ENCODE measurements at regions of chr16 and their contacts with region 1.

Region 1: DNA sequence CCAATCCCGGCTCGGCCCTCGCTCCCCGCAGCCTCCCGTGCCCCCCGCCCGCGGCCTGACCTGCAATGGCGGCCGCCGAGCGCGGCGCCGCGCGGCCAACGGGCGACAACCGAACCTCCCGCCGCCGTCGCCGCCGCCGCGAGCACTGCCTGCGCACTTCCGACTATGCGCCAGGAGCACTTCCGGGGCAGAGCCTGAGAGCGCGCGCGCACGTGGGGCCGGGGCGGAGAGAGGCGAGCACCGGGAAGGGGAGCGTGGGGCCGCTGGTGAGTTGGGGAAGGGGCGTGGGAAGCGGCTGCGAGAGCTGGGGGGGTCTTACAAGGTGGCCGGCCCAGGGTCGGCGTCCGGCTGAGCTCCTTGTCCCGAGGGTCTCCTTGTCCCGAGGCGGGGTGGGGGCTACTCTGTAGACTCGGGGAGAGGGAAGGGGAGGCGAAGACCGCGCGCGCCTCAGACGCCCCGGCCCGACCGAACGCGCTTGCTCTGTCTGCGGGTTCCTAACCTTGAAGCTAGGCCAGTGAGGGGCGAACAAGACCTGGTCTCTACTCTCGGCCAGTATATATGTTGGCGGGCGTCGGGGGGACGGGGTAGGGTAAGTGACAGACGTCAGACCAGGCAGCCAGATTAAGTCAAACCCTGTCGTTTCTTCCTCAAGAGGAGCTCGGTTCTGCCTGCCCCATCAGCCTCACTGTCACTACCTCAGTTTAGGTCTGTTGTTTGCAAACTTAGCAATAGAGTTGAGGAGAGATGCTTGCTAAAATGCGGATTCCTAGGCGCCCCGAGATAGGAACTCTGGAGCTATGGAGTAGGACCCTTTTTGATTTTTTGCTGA is at the starts of genes CHTF8 and UTP4:
- DNase-seq: peak; percentile 70 to 81 (median 72)
- H3K4me3 ChIP-seq: peak within 1 kb of the TSS; percentile 79 to 99 (median 80)
- H3K4me3 Mint-ChIP-seq: peak within 1 kb of the TSS; percentile 95 to 96
- H3K27ac ChIP-seq: peak within 1 kb of the TSS; percentile 70 to 86
- H3K27ac Mint-ChIP-seq: peak within 1 kb of the TSS; percentile 90 to 95 (median 93)
- H3K4me1 ChIP-seq: peaks cover 13 to 19% of the 10 kb centered on the region in 2 donors
- H3K4me1 Mint-ChIP-seq: peaks cover 36% of the 10 kb centered on the region
- H3K27me3 ChIP-seq: no peaks in the 10 kb centered on the region
- H3K27me3 Mint-ChIP-seq: peaks cover 0 to 1% (median 0%) of the 10 kb centered on the region in 3 donors
- CTCF ChIP-seq: no peak
- polyA plus RNA-seq, gene CHTF8: 45.9 to 172 (median 158) TPM
- polyA plus RNA-seq, gene UTP4: 15.3 to 27.8 (median 19.6) TPM

Region 2: DNA sequence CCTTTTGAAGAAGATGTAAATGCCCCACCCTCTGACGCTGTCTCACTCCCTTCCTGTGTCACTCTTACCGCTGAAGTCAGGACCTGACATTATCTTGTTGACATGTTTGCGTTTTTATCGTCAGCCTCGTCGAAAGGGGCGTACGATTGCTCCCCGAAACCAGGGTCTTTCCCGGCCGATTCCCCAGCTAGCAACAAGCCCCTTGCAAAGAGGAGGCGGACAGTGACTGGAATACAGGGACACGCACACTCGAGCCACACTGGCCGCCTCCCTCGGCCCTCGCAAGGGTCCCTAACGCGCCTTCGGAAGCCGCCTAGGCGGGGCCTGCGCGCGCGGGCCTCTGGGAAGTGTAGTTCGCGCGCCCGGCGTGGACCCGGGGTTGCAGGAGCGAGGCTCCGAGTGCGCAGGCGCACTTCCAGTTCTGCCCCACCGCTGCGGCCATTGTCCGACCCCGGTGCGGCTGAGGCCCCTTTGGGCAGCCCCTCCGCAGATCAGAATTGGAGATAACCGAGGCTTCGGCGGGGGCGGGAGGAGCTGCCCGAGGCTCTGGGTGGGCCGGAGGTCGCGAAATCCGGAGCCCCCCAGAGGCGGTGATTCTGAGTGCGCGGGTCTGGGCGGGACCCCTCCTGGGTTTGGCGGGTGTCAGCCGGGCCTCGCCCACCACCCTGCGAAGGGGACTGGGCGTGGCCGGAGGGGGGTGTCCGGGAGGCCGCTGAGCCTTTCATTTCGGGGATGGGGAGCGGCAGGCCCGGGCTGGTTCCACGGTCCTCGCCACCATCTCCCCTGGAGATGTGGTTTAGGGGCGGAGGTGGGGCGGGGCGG is 593.5 kb before region 1 on chr16 and contains the start of gene ZFP90:
- intact Hi-C with region 1: loop called in 1 of 2 experiments (anchors 5 kb)
- DNase-seq: peak; percentile 79 to 88 (median 80)
- H3K4me3 ChIP-seq: peak within 1 kb of the TSS; percentile 82 to 97 (median 96)
- H3K4me3 Mint-ChIP-seq: peak within 1 kb of the TSS; percentile 91 to 98
- H3K27ac ChIP-seq: peak within 1 kb of the TSS; percentile 53 to 80
- H3K27ac Mint-ChIP-seq: peak within 1 kb of the TSS; percentile 90 to 98 (median 96)
- H3K4me1 ChIP-seq: peaks cover 13 to 14% of the 10 kb centered on the region in 2 donors
- H3K4me1 Mint-ChIP-seq: peaks cover 14% of the 10 kb centered on the region
- H3K27me3 ChIP-seq: no peaks in the 10 kb centered on the region
- H3K27me3 Mint-ChIP-seq: peaks cover 0 to 3% (median 2%) of the 10 kb centered on the region in 3 donors
- CTCF ChIP-seq: no peak
- polyA plus RNA-seq, gene ZFP90: 4.2 to 7.9 (median 6.3) TPM

Region 3: GRCh38 chr16:69186642-69187445 is 54.2 kb after region 1 on chr16 and contains the start of gene SNTB2:
- intact Hi-C with region 1: loop called in 1 of 2 experiments (anchors 10 kb)
- DNase-seq: peak; percentile 74 to 87 (median 75)
- H3K4me3 ChIP-seq: peak within 1 kb of the TSS; percentile 65 to 84 (median 75)
- H3K4me3 Mint-ChIP-seq: peak within 1 kb of the TSS; percentile 96 to 98
- H3K27ac ChIP-seq: peak within 1 kb of the TSS; percentile 22 to 80
- H3K27ac Mint-ChIP-seq: peak within 1 kb of the TSS; percentile 89 to 96 (median 93)
- H3K4me1 ChIP-seq: peaks cover 28 to 35% of the 10 kb centered on the region in 2 donors
- H3K4me1 Mint-ChIP-seq: peaks cover 34% of the 10 kb centered on the region
- H3K27me3 ChIP-seq: peaks cover 22 to 34% of the 10 kb centered on the region in 2 donors
- H3K27me3 Mint-ChIP-seq: peaks cover 30 to 67% (median 35%) of the 10 kb centered on the region in 3 donors
- CTCF ChIP-seq: no peak
- polyA plus RNA-seq, gene SNTB2: 1.2 to 6.0 (median 5.0) TPM

Region 4: DNA sequence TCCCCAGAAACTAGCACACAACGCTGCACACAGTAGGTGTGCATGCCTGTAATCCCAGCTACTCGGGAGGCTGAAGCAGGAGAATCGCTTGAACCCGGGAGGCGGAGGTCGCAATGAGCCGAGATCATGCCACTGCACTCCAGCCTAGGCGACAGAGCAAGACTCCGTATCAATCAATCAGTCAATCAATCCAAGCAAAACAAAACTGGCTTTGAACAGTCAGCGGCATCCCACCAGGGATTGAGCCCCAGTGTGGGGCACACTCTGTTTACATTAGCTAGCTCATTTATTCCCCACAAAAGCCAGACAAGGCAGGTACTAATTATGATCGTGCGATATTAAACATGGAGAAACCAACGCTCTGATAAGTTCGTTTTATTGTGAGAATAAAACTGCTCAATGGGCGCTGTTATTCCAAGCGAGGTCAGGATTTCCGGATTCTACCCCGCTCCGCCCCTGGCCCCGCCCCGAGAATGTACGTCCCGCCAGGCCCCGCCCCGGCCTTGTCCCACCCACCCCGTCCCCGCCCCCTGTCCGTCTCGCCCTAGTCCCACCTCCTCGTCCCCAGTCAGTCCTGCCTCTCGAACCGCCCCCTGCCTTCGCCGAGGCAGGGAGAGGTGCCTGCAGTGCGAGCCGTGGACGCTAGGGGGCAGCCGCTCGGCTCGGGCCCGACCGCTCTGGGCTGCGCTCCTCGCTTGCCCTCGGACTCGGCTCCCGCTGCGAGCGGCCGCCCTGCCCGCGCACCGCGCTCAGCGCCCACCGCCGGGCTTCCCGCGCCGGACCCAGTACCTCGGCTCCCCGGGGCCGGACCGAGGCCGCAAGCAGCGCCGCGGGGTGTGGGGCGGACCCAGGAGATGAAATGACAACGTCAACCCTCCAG is 178.3 kb after region 1 on chr16 and contains the start of gene VPS4A:
- intact Hi-C with region 1: loop called in 1 of 2 experiments (anchors 10 kb)
- DNase-seq: peak; percentile 95 to 97 (median 96)
- H3K4me3 ChIP-seq: peak within 1 kb of the TSS; percentile 66 to 78 (median 78)
- H3K4me3 Mint-ChIP-seq: peak within 1 kb of the TSS; percentile 98 to 100
- H3K27ac ChIP-seq: peak within 1 kb of the TSS; percentile 70 to 93
- H3K27ac Mint-ChIP-seq: peak within 1 kb of the TSS; percentile 88 to 96 (median 95)
- H3K4me1 ChIP-seq: peaks cover 13 to 14% of the 10 kb centered on the region in 2 donors
- H3K4me1 Mint-ChIP-seq: peaks cover 15% of the 10 kb centered on the region
- H3K27me3 ChIP-seq: no peaks in the 10 kb centered on the region
- H3K27me3 Mint-ChIP-seq: peaks cover 1 to 10% (median 5%) of the 10 kb centered on the region in 3 donors
- CTCF ChIP-seq: peak; percentile 82
- polyA plus RNA-seq, gene VPS4A: 18.2 to 25.7 (median 21.8) TPM

Measured in CD14-positive monocyte (primary cell).